ENCODE measurements at regions of chrX and their contacts with region 1.

Region 1: DNA sequence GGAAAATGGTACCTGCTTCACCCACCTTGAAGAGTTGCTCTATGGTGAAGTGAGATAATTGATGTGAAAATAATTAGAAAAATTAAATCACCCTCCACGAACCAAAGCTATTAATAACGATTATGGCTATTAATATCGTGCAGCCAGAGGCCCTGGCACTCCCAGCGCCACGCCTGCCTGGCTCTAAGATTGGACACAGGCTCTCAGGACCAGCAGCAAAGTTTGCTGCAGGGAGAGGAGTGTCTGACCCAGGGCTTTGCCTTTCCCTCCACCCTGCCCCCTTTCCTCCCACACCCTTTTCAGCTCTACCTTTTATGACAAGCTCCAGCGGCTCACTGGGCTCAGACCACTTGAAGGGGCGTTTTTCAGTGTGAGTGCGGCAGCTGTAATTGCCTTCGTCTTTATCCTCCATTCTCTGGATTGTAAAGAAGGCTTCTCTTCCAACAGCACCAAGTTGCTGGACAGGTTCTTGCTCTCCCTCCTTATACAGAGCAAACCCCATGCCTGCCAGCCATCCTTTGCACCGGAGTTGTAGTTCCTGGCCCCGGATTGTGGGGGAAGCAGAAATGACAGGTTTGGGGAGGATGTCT is 11.5 kb downstream of the IGSF1 start:
- DNase-seq: no peak
- H3K4me3 ChIP-seq: no peak overlapping the region
- H3K27ac ChIP-seq: no peak overlapping the region
- H3K4me1 ChIP-seq: no peaks in the 10 kb centered on the region
- H3K27me3 ChIP-seq: peaks cover 35% of the 10 kb centered on the region
- CTCF ChIP-seq: no peak

Region 2: DNA sequence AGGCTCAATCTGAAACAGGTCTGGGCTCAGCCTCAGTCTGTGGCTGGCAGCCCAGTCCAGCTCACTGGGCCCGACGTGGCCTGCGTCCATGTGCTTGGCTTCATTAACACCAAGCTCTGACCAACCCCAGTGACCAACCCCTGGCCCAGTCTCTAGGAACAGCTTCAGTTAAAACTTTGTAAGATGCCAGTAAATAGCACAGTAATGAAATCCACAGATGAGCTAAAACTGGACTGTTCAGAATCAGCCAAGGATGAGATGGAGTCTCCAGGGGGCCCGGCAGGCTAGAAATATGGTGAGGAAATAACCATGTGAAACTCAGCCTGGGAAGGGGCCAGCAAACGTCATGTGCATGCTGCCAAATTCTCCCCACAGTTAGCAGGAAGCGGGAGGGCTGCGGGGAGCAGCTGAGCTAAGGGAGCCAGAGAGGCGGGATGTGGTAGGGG is 1576.0 kb before region 1 on chrX:
- CTCF ChIA-PET with region 1: no interaction called
- POLR2A ChIA-PET with region 1: interaction called, 21 read pairs
- intact Hi-C with region 1: no loop called
- DNase-seq: no peak
- H3K4me3 ChIP-seq: no peak overlapping the region
- H3K27ac ChIP-seq: no peak overlapping the region
- H3K4me1 ChIP-seq: peaks cover 22% of the 10 kb centered on the region
- H3K27me3 ChIP-seq: 0 out of 2 replicates have a peak, but pooled peaks cover 4% of the 10 kb centered on the region
- CTCF ChIP-seq: no peak